ENCODE measurements at regions of chr20 and their contacts with region 1.

Region 1: DNA sequence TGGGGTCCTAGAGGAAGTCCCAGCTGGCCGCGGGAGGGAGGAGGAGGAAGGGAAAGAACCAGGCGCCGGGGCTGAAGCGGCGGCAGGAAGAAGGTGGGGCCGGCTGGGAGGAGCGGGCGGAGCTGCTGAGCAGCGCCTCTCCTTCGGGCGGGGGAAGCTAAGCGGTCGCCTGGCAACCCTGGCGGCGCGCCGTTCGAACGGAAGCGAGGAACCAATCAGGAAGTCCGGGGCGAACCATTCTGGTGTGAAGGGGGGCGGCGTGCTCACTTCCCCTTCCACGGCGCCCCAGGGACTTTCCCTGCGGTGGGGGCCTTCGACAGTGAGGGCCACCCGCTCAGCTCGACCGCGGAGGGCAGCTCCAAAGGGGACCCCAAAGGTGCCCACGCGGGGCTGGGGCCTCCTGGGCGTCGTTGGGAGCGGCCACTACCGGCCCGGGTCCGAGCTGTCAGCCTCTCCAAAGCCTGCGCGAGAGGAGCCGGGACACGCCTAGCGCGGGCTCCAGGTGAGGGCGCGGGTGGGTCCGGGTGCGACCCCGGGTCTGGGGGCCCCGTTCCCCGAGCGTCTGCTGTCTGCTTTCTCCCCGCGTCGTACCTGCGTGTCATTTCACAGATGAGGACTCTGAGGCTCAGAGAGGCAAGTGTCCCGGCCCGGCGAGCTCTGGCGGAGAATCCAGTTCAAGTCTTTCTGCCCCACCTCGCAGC is at the start of gene FAM110A:
- H3K4me3 ChIP-seq: peak within 1 kb of the TSS; percentile 76
- H3K27ac ChIP-seq: peak within 1 kb of the TSS; percentile 68; the same call in 1 of the 2 replicates
- H3K4me1 ChIP-seq: peaks cover 3% of the 10 kb centered on the region; the same call in 1 of the 2 replicates
- CTCF ChIP-seq: peak; percentile 68

Region 2: GRCh38 chr20:844473-845225 is 11.0 kb after region 1 on chr20:
- CTCF ChIA-PET with region 1: interaction called, 3 read pairs
- POLR2A ChIA-PET with region 1: interaction called, 13 read pairs
- H3K4me3 ChIP-seq: peak overlapping the region; percentile 27
- H3K27ac ChIP-seq: no peak overlapping the region
- H3K4me1 ChIP-seq: peaks cover 2% of the 10 kb centered on the region; the same call in 1 of the 2 replicates
- CTCF ChIP-seq: no peak

Measured in HEK293 (cell line).